B cell (primary cell): ENCODE measurements at regions of chr19 and their contacts with region 1.

Region 1: GRCh38 chr19:58400916-58401839 is 5.7 kb downstream of the RNF225 start:
- DNase-seq: peak; percentile 100
- ATAC-seq: peak; percentile 97
- H3K4me3 ChIP-seq: peak overlapping the region; percentile 32 to 69 (median 64)
- H3K4me3 Mint-ChIP-seq: peak overlapping the region; percentile 89
- H3K27ac ChIP-seq: peak overlapping the region; percentile 62 to 87
- H3K27ac Mint-ChIP-seq: peak overlapping the region; percentile 91
- H3K4me1 ChIP-seq: peaks cover 7 to 15% of the 10 kb centered on the region in 2 donors
- H3K4me1 Mint-ChIP-seq: peaks cover 7% of the 10 kb centered on the region
- H3K27me3 ChIP-seq: peaks cover 0 to 19% (median 7%) of the 10 kb centered on the region in 4 experiments
- H3K27me3 Mint-ChIP-seq: peaks cover 3% of the 10 kb centered on the region
- CTCF ChIP-seq: no peak

Region 2: DNA sequence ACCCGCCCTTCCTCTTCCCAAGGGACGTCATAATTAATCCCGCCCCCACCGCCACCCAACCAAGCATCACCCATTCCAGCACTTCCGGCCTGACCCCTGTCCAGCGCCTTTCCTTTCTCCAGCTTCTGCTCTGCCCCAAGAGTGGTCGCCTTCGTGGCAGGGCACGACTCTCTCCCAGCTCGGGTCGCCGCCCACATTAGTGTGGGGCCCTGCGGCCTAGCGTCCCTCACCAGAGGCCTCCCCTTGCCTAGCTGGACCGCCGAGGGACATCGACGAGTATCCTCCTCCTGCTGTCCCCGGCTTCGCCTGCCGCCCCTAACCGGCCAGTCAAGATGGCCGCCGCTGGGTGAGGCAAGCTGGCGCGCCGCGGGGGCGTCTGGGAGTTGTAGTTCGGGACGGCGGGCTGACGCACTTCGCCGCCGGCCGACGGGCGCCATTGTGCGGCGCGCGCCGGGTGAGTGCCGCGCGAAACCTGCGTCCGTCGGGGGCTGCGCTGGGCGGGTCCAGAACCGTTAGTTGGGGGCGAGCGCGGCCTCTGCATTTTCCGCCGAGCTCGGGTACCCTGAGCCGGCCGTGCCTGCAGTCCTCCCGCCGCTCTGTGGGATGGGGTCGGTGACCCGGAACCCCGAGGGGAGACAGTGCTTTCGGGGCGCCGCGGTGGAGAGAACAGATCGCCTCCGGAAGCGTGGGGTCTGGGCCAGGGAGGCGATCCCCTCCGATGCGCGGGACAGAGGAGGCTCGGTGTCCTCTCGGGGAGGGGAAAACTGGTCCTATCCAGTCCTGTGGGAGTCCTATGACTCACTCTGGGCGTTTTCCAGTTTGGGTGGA is 218.0 kb before region 1 on chr19 and contains the start of gene ZNF274:
- CTCF ChIA-PET with region 1: no interaction called
- POLR2A ChIA-PET with region 1: no interaction called
- intact Hi-C with region 1: loop called (anchors 1 kb)
- DNase-seq: peak; percentile 97
- ATAC-seq: peak; percentile 85
- H3K4me3 ChIP-seq: peak within 1 kb of the TSS; percentile 78 to 100 (median 88)
- H3K4me3 Mint-ChIP-seq: peak within 1 kb of the TSS; percentile 96
- H3K27ac ChIP-seq: peak within 1 kb of the TSS; percentile 99 to 100
- H3K27ac Mint-ChIP-seq: peak within 1 kb of the TSS; percentile 100
- H3K4me1 ChIP-seq: peaks cover 12 to 20% of the 10 kb centered on the region in 2 donors
- H3K4me1 Mint-ChIP-seq: peaks cover 26% of the 10 kb centered on the region
- H3K27me3 ChIP-seq: no peaks in the 10 kb centered on the region
- H3K27me3 Mint-ChIP-seq: no peaks in the 10 kb centered on the region
- CTCF ChIP-seq: no peak
- total RNA-seq, gene ZNF274: 83.7 and 85.4 TPM in 2 replicates

Region 3: GRCh38 chr19:58386576-58387337 is 14.4 kb before region 1 on chr19 and contains the start of gene RPS5:
- CTCF ChIA-PET with region 1: no interaction called
- POLR2A ChIA-PET with region 1: interaction called, 3 read pairs
- intact Hi-C with region 1: loop called (anchors 1 kb)
- DNase-seq: peak; percentile 98
- ATAC-seq: peak; percentile 90
- H3K4me3 ChIP-seq: peak within 1 kb of the TSS; percentile 71 to 87 (median 76)
- H3K4me3 Mint-ChIP-seq: peak within 1 kb of the TSS; percentile 97
- H3K27ac ChIP-seq: peak within 1 kb of the TSS; percentile 94 to 95
- H3K27ac Mint-ChIP-seq: peak within 1 kb of the TSS; percentile 99
- H3K4me1 ChIP-seq: peaks cover 27 to 33% of the 10 kb centered on the region in 2 donors
- H3K4me1 Mint-ChIP-seq: peaks cover 44% of the 10 kb centered on the region
- H3K27me3 ChIP-seq: no peaks in the 10 kb centered on the region
- H3K27me3 Mint-ChIP-seq: no peaks in the 10 kb centered on the region
- CTCF ChIP-seq: no peak
- total RNA-seq, gene RPS5: 1,234 and 1,311 TPM in 2 replicates

Region 4: GRCh38 chr19:58466760-58467589 is 65.8 kb after region 1 on chr19 and contains the start of gene ZNF324:
- CTCF ChIA-PET with region 1: no interaction called
- POLR2A ChIA-PET with region 1: no interaction called
- intact Hi-C with region 1: loop called (anchors 2 kb)
- DNase-seq: peak; percentile 97
- ATAC-seq: peak; percentile 96
- H3K4me3 ChIP-seq: peak within 1 kb of the TSS; percentile 34 to 91 (median 89)
- H3K4me3 Mint-ChIP-seq: peak within 1 kb of the TSS; percentile 85
- H3K27ac ChIP-seq: peak within 1 kb of the TSS; percentile 18 to 90
- H3K27ac Mint-ChIP-seq: peak within 1 kb of the TSS; percentile 85
- H3K4me1 ChIP-seq: peaks cover 8 to 25% of the 10 kb centered on the region in 2 donors
- H3K4me1 Mint-ChIP-seq: peaks cover 26% of the 10 kb centered on the region
- H3K27me3 ChIP-seq: no peaks in the 10 kb centered on the region
- H3K27me3 Mint-ChIP-seq: no peaks in the 10 kb centered on the region
- CTCF ChIP-seq: no peak
- total RNA-seq, gene ZNF324: 17.6 and 21.0 TPM in 2 replicates

Region 5: GRCh38 chr19:58499021-58499927 is 98.1 kb after region 1 on chr19:
- CTCF ChIA-PET with region 1: no interaction called
- POLR2A ChIA-PET with region 1: no interaction called
- intact Hi-C with region 1: loop called (anchors 1 kb)
- DNase-seq: peak; percentile 96
- ATAC-seq: peak; percentile 89
- H3K4me3 ChIP-seq: peak overlapping the region; percentile 55 to 81 (median 69)
- H3K4me3 Mint-ChIP-seq: peak overlapping the region; percentile 91
- H3K27ac ChIP-seq: peak overlapping the region; percentile 74 to 85
- H3K27ac Mint-ChIP-seq: peak overlapping the region; percentile 93
- H3K4me1 ChIP-seq: peaks cover 9 to 20% of the 10 kb centered on the region in 2 donors
- H3K4me1 Mint-ChIP-seq: peaks cover 19% of the 10 kb centered on the region
- H3K27me3 ChIP-seq: no peaks in the 10 kb centered on the region
- H3K27me3 Mint-ChIP-seq: no peaks in the 10 kb centered on the region
- CTCF ChIP-seq: peak; percentile 45

Region 6: DNA sequence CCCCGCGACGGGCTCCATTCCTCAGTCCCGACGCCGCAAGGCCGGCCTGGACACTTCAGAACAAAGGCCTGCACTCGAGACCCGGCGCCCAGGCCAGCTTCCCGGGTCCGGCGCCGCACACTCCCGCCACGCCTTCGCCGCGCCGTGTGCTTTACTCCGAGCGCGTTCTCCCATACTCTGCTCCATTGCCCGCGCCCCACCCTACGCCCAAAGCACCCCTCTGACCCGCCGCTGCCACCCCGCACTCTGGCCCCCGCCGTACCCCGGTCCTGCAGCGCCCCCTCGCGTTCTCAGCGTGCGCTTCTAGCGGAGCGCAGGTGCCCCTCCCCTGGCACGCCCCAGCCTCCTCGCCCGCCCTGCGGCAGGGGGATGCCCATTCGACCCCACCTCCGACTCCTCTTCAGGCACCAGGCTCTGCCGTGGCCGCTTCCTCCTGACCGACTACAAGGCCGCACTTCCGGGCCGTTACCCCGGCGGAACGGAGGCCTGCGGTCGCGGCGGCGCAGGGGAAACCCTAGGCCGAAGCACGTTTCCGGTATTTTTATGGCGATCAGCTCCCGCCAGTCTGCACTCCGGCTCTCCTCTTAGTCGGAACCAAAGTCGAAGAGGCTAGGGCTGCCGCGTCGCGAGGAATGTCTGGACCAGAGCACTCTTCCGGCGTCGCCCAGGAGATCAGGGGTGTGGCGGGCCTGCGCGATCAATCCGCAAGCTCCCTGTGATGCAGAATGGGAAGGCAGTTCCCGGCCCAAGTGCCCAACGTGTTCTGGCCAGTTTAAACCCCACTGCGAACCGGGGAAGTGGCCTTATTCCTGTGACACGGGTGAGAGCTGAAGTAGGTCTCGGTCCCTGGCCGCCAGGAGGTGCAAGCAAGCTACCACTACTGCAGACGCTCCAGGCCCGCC is 118.4 kb after region 1 on chr19 and contains the start of gene ZBTB45:
- CTCF ChIA-PET with region 1: no interaction called
- POLR2A ChIA-PET with region 1: no interaction called
- intact Hi-C with region 1: no loop called
- DNase-seq: peak; percentile 96
- ATAC-seq: peak; percentile 84
- H3K4me3 ChIP-seq: peak within 1 kb of the TSS; percentile 64 to 78 (median 71)
- H3K4me3 Mint-ChIP-seq: peak within 1 kb of the TSS; percentile 98
- H3K27ac ChIP-seq: peak within 1 kb of the TSS; percentile 76 to 96
- H3K27ac Mint-ChIP-seq: peak within 1 kb of the TSS; percentile 99
- H3K4me1 ChIP-seq: peaks cover 18 to 28% of the 10 kb centered on the region in 2 donors
- H3K4me1 Mint-ChIP-seq: peaks cover 42% of the 10 kb centered on the region
- H3K27me3 ChIP-seq: no peaks in the 10 kb centered on the region
- H3K27me3 Mint-ChIP-seq: no peaks in the 10 kb centered on the region
- CTCF ChIP-seq: peak; percentile 72
- total RNA-seq, gene ZBTB45: 20.9 and 28.4 TPM in 2 replicates